ENCODE measurements at regions of chr4 and their contacts with region 1.

Region 1: GRCh38 chr4:140071806-140072205 is 82.2 kb downstream of the MAML3 start:
- DNase-seq: peak; percentile 89
- H3K4me3 Mint-ChIP-seq: peak overlapping the region; percentile 46
- H3K27ac Mint-ChIP-seq: peak overlapping the region; percentile 39
- H3K4me1 Mint-ChIP-seq: peaks cover 41% of the 10 kb centered on the region
- H3K27me3 Mint-ChIP-seq: no peaks in the 10 kb centered on the region

Region 2: GRCh38 chr4:140061194-140061593 is 10.6 kb before region 1 on chr4:
- CTCF ChIA-PET with region 1: interaction called, 6 read pairs
- intact Hi-C with region 1: loop called (anchors 1 kb)
- DNase-seq: no peak
- H3K4me3 Mint-ChIP-seq: peak overlapping the region; percentile 40
- H3K27ac Mint-ChIP-seq: no peak overlapping the region
- H3K4me1 Mint-ChIP-seq: peaks cover 25% of the 10 kb centered on the region
- H3K27me3 Mint-ChIP-seq: peaks cover 6% of the 10 kb centered on the region

Region 3: DNA sequence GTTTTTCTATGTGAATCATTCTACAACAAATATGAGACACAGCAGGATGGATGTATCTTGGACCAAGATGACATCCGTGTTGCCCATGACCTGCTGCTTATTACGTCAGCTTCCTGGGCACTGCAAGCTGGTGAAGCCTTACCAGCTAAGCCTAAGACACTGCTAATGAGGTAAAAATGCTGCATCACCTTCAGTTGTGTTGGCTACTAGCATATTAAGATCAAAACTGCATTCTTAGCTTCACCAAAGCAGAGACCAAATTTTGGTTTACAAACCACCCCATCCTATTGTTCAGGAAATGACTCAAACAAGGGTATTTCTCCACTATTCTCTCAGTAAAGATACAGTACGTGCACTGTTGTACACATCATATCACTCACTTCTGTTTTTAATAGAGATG is 31.9 kb after region 1 on chr4:
- CTCF ChIA-PET with region 1: interaction called, 3 read pairs
- intact Hi-C with region 1: loop called (anchors 1 kb)
- DNase-seq: peak; percentile 64
- H3K4me3 Mint-ChIP-seq: no peak overlapping the region
- H3K27ac Mint-ChIP-seq: no peak overlapping the region
- H3K4me1 Mint-ChIP-seq: peaks cover 48% of the 10 kb centered on the region
- H3K27me3 Mint-ChIP-seq: peaks cover 2% of the 10 kb centered on the region

Region 4: GRCh38 chr4:140116442-140117104 is 44.8 kb after region 1 on chr4:
- CTCF ChIA-PET with region 1: interaction called, 3 read pairs
- intact Hi-C with region 1: loop called (anchors 1 kb)
- DNase-seq: peak; percentile 66
- H3K4me3 Mint-ChIP-seq: no peak overlapping the region
- H3K27ac Mint-ChIP-seq: peak overlapping the region; percentile 70
- H3K4me1 Mint-ChIP-seq: peaks cover 24% of the 10 kb centered on the region
- H3K27me3 Mint-ChIP-seq: no peaks in the 10 kb centered on the region

Region 5: DNA sequence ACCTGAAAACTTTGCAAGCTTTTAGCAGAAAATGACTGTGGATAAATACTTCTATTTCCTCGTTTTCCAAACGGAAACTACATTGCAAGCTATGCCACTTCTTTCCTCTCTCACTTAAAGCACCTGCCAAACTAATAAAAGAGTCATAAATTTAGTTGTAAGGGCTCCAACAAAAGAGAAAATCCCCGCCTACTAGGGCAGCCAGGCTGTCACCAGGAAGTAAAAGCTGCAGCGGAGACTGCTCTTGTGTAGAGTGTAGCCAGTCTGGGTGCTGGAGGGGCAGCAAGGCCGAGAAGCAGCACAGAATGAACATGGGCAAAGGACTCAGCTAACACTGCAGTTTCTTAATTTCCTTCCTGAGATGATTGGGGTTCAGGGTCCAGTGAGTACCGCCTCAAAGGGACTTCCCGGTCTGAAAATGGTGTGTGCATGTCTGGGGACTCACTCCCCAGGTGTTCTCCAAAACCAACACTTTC is 171.5 kb after region 1 on chr4:
- CTCF ChIA-PET with region 1: no interaction called
- intact Hi-C with region 1: no loop called
- DNase-seq: peak; percentile 33
- H3K4me3 Mint-ChIP-seq: peak overlapping the region; percentile 38
- H3K27ac Mint-ChIP-seq: peak overlapping the region; percentile 21
- H3K4me1 Mint-ChIP-seq: peaks cover 19% of the 10 kb centered on the region
- H3K27me3 Mint-ChIP-seq: peaks cover 2% of the 10 kb centered on the region

Measured in activated naive CD4-positive, alpha-beta T cell treated with anti-CD3 and anti-CD28 coated beads for 36 hours (primary cell).